ENCODE measurements at regions of chr17 and their contacts with region 1.

Region 1: DNA sequence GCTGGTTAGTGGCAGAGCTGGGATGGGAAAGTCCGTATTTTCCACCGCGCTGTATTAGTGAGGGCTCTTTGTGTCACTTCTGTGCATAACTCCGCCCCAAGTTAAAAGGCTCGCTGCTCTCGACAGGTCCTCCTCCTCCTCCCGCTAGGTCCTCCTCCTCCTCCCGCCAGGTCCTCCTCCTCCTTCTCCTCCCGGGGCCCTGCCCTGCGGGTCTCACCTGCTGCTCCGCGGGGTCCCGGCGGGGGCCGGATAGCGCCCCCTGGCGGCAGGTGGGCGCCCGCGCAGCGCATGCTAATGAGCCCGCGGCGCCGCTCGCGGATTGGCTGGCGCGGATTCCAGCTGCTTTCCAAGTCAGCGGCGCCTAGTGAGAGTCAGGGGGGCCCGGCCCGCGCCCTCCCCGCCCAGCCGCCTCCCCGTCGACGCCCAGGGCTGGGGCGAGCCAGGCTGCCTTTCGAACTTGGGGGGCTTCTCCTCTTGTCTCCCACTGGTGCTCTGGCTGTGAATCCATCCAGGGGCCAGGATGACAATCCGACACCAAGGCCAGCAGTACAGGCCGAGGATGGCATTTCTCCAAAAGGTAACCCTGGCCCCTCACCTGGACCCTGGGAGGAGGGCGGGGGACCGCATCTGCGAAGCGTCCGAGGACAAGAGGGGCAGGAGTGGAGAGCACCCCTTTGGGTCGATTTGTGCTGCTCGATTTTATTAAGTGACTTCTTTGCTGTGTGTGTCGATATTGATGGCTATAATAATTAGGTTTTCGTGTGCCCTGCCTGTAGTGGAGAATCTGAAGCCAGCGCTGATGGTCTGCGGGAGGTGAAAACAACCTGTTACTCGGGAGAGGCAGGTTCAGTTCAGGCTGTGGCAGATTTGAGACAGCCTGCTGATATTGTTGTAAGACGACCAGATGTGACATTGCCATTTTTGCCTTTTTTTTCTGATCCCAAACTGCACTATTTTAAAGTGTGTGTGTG is at the start of gene RGS9:
- DNase-seq: peak; percentile 97
- H3K4me3 ChIP-seq: peak within 1 kb of the TSS; percentile 46 to 60
- H3K27ac ChIP-seq: no peak within 1 kb of the TSS; a peak in 1 of 4 replicates
- H3K4me1 ChIP-seq: peaks cover 3 to 16% of the 10 kb centered on the region in 2 experiments; a peak in 1 of 4 replicates
- H3K27me3 ChIP-seq: peaks cover 11% of the 10 kb centered on the region; the same call in 1 of the 2 replicates
- CTCF ChIP-seq: peak; percentile 99
- EP300 ChIP-seq: no peak
- RAD21 ChIP-seq: peak; percentile 71
- polyA plus RNA-seq, gene RGS9: 1.3 and 1.4 TPM in 2 replicates

Region 2: GRCh38 chr17:64950871-64951270 is 186.4 kb before region 1 on chr17:
- CTCF ChIA-PET with region 1: no interaction called
- POLR2A ChIA-PET with region 1: no interaction called
- DNase-seq: no peak
- H3K4me3 ChIP-seq: no peak overlapping the region
- H3K27ac ChIP-seq: no peak overlapping the region
- H3K4me1 ChIP-seq: no peaks in the 10 kb centered on the region; a peak in 1 of 4 replicates
- H3K27me3 ChIP-seq: no peaks in the 10 kb centered on the region
- CTCF ChIP-seq: no peak
- EP300 ChIP-seq: no peak
- RAD21 ChIP-seq: no peak

Region 3: GRCh38 chr17:64968652-64969501 is 168.4 kb before region 1 on chr17:
- CTCF ChIA-PET with region 1: interaction called, 10 read pairs
- POLR2A ChIA-PET with region 1: no interaction called
- DNase-seq: no peak
- H3K4me3 ChIP-seq: no peak overlapping the region
- H3K27ac ChIP-seq: no peak overlapping the region
- H3K4me1 ChIP-seq: peaks cover 7 to 13% of the 10 kb centered on the region in 2 experiments; a peak in 2 of 4 replicates
- H3K27me3 ChIP-seq: no peaks in the 10 kb centered on the region
- CTCF ChIP-seq: no peak
- EP300 ChIP-seq: no peak
- RAD21 ChIP-seq: no peak

Region 4: DNA sequence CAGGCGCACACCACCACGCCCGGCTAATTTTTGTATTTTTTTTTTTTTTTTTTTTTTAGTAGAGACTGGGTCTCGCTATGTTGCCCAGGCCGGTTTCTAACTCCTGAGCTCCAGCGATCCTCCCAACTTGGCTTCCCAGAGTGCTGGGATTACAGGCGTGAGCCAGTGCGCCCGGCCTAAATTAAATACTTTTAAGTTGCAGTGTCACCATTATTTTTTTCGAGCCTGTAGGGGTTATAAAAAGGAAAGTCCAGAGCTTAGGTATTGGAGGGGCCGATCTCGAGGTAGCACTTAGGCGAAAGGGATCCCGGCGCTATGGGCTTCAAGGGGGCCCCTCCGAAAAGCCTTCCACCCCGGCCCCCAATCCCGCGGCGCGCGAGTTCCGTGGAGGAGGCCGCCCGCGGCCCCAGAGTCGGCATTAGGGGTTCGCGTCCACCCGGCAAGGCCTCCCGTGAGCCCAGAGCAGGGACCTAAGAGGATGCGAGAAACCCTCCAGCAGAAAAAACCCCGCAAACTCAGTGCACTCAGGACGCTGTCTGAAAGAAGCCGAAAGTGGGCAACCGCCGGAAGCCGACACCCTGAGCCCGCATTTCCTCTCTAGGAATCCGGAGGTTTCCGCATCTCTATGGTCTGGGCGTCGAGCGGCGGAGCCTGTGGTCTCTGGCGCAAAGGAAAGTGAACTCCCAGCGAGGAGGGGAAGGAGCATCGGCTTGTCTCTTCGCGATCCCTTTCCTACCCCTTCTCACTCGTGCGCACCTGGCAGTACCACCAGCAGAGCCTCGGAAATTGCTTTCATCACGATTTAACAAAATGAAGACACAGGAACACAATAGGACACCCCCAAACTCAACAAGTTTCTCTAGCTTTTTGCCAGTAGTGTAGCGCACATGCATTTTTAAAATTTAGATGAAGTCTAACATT is 14.2 kb before region 1 on chr17:
- CTCF ChIA-PET with region 1: interaction called, 33 read pairs
- POLR2A ChIA-PET with region 1: interaction called, 7 read pairs
- DNase-seq: peak; percentile 95
- H3K4me3 ChIP-seq: peak overlapping the region; percentile 51 to 70
- H3K27ac ChIP-seq: peak overlapping the region; percentile 57 to 90
- H3K4me1 ChIP-seq: peaks cover 8% of the 10 kb centered on the region in 2 experiments; a peak in 3 of 4 replicates
- H3K27me3 ChIP-seq: no peaks in the 10 kb centered on the region; the same call in 1 of the 2 replicates
- CTCF ChIP-seq: no peak
- EP300 ChIP-seq: no peak
- RAD21 ChIP-seq: 0 out of 2 replicates have a peak, but pooled peaks have one; percentile 25

Region 5: GRCh38 chr17:65173284-65173793 is 36.0 kb after region 1 on chr17:
- CTCF ChIA-PET with region 1: interaction called, 32 read pairs
- POLR2A ChIA-PET with region 1: interaction called, 3 read pairs
- DNase-seq: peak; percentile 71
- H3K4me3 ChIP-seq: no peak overlapping the region
- H3K27ac ChIP-seq: peak overlapping the region in 1 of 2 experiments; percentile 76; a peak in 2 of 4 replicates
- H3K4me1 ChIP-seq: peaks cover 0 to 22% of the 10 kb centered on the region in 2 experiments; a peak in 2 of 4 replicates
- H3K27me3 ChIP-seq: no peaks in the 10 kb centered on the region
- CTCF ChIP-seq: peak; percentile 22
- EP300 ChIP-seq: 0 out of 4 replicates have a peak, but pooled peaks of 1 of the 2 experiments have one; percentile 25
- RAD21 ChIP-seq: no peak

Region 6: GRCh38 chr17:65198653-65199382 is 61.5 kb after region 1 on chr17:
- CTCF ChIA-PET with region 1: interaction called, 16 read pairs
- POLR2A ChIA-PET with region 1: no interaction called
- DNase-seq: peak; percentile 90
- H3K4me3 ChIP-seq: no peak overlapping the region
- H3K27ac ChIP-seq: 0 out of 4 replicates have a peak overlapping the region, but pooled peaks of 1 of the 2 experiments have one; percentile 4
- H3K4me1 ChIP-seq: peaks cover 0 to 4% of the 10 kb centered on the region in 2 experiments; a peak in 1 of 4 replicates
- H3K27me3 ChIP-seq: no peaks in the 10 kb centered on the region
- CTCF ChIP-seq: peak; percentile 96
- EP300 ChIP-seq: peak; percentile 52 to 92; a peak in 3 of 4 replicates
- RAD21 ChIP-seq: peak; percentile 99

Measured in SK-N-SH (cell line).